ENCODE measurements at regions of chr4 and their contacts with region 1.

Region 1: GRCh38 chr4:781493-782216 is 44.3 kb downstream of the CPLX1 start:
- DNase-seq: peak; percentile 99
- ATAC-seq: peak; percentile 87 to 97 (median 92)
- H3K4me3 ChIP-seq: peak overlapping the region; percentile 97
- H3K4me3 Mint-ChIP-seq: peak overlapping the region; percentile 92
- H3K27ac ChIP-seq: peak overlapping the region; percentile 77
- H3K27ac Mint-ChIP-seq: peak overlapping the region; percentile 93 to 97
- H3K4me1 ChIP-seq: peaks cover 43% of the 10 kb centered on the region
- H3K4me1 Mint-ChIP-seq: peaks cover 44 to 55% of the 10 kb centered on the region in 2 donors
- H3K27me3 ChIP-seq: peaks cover 12% of the 10 kb centered on the region
- H3K27me3 Mint-ChIP-seq: peaks cover 18 to 22% of the 10 kb centered on the region in 2 donors
- CTCF ChIP-seq: no peak

Region 2: DNA sequence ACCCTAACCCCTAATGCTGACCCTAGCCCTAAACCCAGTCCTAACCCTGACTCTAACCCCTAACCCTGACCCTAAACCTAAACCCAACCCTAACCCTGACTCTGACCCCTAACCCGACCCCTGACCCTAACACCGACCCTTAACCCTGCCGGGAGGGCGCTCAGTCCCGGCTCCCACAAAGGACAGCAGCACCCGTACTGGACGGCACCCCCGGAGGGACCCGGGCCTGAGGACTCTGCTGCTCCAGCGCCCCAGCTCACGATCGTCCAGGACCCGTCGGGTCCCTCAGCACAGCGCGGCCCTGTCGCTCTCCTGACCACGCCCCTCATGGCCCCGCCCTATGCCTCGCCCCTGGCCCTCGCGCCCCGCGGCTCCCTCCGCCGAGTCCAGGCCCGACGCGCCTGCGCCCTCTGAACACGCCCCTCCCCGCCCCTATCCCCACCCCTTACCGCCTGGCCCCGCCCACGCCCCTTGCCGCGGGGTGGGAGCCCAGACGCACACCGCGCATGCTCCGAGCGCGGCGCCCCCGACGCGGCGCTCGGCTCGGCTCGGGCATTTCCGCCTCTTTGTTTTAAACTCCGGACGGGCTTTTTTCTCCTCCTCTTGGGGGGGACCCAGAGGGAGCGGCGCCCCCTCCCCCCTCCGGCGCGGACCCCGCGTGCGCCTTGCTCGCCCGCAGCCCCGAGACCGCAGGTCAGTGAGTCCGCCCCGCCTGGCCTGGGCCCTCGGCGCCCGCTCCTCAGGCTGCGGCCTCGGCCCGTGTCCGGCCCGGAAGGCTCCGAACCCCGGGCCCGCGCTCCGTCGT is 76.2 kb before region 1 on chr4 and contains the start of gene PCGF3:
- intact Hi-C with region 1: loop called (anchors 5 kb)
- DNase-seq: peak; percentile 91 to 96
- ATAC-seq: peak; percentile 95 to 99 (median 97)
- H3K4me3 ChIP-seq: peak within 1 kb of the TSS; percentile 56
- H3K4me3 Mint-ChIP-seq: peak within 1 kb of the TSS; percentile 87
- H3K27ac ChIP-seq: peak within 1 kb of the TSS; percentile 70
- H3K27ac Mint-ChIP-seq: peak within 1 kb of the TSS; percentile 68 to 91
- H3K4me1 ChIP-seq: peaks cover 32% of the 10 kb centered on the region
- H3K4me1 Mint-ChIP-seq: peaks cover 13 to 37% of the 10 kb centered on the region in 2 donors
- H3K27me3 ChIP-seq: no peaks in the 10 kb centered on the region
- H3K27me3 Mint-ChIP-seq: no peaks in the 10 kb centered on the region
- CTCF ChIP-seq: no peak
- total RNA-seq, gene PCGF3: 71.2 to 101 (median 97.2) TPM

Region 3: DNA sequence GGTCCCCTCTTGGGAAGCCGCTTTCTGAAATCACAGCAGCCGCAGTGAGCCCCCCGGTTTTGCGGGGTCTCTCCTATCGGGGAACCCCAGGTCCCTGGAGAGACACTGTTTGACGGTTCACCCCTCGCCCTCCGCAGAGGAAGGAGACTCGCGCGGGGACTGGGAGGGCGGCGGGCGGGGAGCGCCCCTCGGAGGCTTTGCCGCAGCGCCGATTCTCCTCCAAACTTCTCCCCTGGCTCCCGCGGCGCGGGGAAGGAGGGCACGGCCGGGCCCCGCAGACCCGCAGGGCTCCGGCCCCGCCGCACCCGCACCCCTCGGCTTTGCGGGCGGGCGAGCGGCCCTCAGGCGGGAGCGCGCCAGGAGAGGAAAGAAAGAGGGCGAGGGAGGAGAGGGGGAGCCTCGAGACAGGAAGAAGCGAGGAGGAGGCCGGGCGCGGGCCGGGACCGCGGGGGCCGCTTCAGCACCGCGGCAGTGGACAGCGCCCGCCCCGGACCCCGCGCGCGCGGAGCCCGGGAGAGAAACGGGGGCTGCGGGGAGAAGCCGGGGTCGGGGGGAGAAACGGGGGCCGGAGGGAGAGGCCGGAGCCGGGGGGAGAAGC is 43.7 kb after region 1 on chr4:
- intact Hi-C with region 1: loop called (anchors 2 kb)
- DNase-seq: peak; percentile 49 to 64
- ATAC-seq: peak; percentile 68 to 93 (median 87)
- H3K4me3 ChIP-seq: no peak overlapping the region
- H3K4me3 Mint-ChIP-seq: peak overlapping the region; percentile 47
- H3K27ac ChIP-seq: no peak overlapping the region
- H3K27ac Mint-ChIP-seq: no peak overlapping the region
- H3K4me1 ChIP-seq: peaks cover 10% of the 10 kb centered on the region
- H3K4me1 Mint-ChIP-seq: peaks cover 0 to 5% of the 10 kb centered on the region in 2 donors
- H3K27me3 ChIP-seq: peaks cover 35% of the 10 kb centered on the region
- H3K27me3 Mint-ChIP-seq: peaks cover 32 to 34% of the 10 kb centered on the region in 2 donors
- CTCF ChIP-seq: no peak